ENCODE measurements at regions of chr2 and their contacts with region 1.

Region 1: DNA sequence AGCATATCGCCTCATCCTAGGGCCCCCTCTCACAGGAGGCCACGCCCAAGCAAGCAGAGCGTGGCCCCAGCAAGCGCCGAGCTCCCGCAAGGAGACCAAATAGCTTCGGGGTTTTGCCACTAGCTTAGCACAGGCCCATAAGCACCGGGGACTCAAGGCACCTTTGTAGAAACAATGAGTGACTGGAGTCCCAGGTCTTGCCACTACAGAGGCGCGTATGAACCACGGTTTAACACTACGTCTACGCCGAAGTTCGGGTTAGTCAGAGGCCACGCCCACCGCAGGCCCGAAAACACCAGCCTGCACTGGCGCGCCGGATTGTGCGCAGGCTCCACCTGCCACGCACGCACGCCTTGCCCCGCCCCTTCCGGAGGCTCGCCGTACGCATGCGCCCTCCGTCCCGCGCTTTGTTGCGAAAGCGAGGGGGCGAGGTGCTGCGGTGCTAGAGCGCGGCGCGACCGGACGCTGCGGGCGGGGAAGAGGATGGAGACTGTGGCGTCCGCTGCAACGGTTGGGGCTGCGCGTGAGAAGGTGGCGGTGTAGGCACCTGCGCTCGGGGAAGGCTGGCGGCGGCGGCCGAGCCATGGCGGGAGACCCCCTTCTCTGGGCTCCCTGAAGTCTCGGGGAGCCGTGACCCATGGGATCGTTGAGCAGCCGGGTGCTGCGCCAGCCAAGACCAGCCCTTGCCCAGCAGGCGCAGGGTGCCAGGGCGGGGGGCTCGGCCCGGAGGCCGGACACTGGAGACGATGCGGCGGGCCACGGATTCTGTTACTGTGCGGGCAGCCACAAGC is at the start of gene GMCL1:
- DNase-seq: peak; percentile 98 to 100 (median 99)
- ATAC-seq: peak; percentile 97
- H3K4me3 ChIP-seq: peak within 1 kb of the TSS; percentile 81
- H3K4me3 Mint-ChIP-seq: peak within 1 kb of the TSS; percentile 83 to 97 (median 94)
- H3K27ac ChIP-seq: peak within 1 kb of the TSS; percentile 88
- H3K27ac Mint-ChIP-seq: peak within 1 kb of the TSS; percentile 89 to 97 (median 95)
- H3K4me1 ChIP-seq: peaks cover 10 to 17% of the 10 kb centered on the region in 2 donors
- H3K4me1 Mint-ChIP-seq: peaks cover 31 to 61% (median 54%) of the 10 kb centered on the region in 7 donors
- H3K27me3 ChIP-seq: no peaks in the 10 kb centered on the region
- H3K27me3 Mint-ChIP-seq: no peaks in the 10 kb centered on the region
- total RNA-seq, gene GMCL1: 24.9 to 30.5 (median 27.3) TPM

Region 2: GRCh38 chr2:69386789-69387734 is 442.4 kb before region 1 on chr2 and contains the start of gene GFPT1:
- CTCF ChIA-PET with region 1: no interaction called
- POLR2A ChIA-PET with region 1: no interaction called
- intact Hi-C with region 1: loop called (anchors 1 to 2 kb)
- DNase-seq: peak; percentile 85 to 96 (median 91)
- ATAC-seq: peak; percentile 99
- H3K4me3 ChIP-seq: peak within 1 kb of the TSS; percentile 68
- H3K4me3 Mint-ChIP-seq: peak within 1 kb of the TSS; percentile 84 to 94 (median 88)
- H3K27ac ChIP-seq: peak within 1 kb of the TSS; percentile 83
- H3K27ac Mint-ChIP-seq: peak within 1 kb of the TSS; percentile 63 to 94 (median 86)
- H3K4me1 ChIP-seq: peaks cover 17 to 18% of the 10 kb centered on the region in 2 donors
- H3K4me1 Mint-ChIP-seq: peaks cover 28 to 53% (median 41%) of the 10 kb centered on the region in 7 donors
- H3K27me3 ChIP-seq: no peaks in the 10 kb centered on the region
- H3K27me3 Mint-ChIP-seq: no peaks in the 10 kb centered on the region
- total RNA-seq, gene GFPT1: 12.8 to 29.8 (median 16.6) TPM

Region 3: GRCh38 chr2:69741619-69742466 is 87.6 kb before region 1 on chr2 and contains the start of gene ANXA4:
- CTCF ChIA-PET with region 1: no interaction called
- POLR2A ChIA-PET with region 1: no interaction called
- intact Hi-C with region 1: loop called in 1 of 2 experiments (anchors 1 kb)
- DNase-seq: peak; percentile 23 to 75 (median 33)
- ATAC-seq: peak; percentile 83
- H3K4me3 ChIP-seq: peak within 1 kb of the TSS; percentile 63
- H3K4me3 Mint-ChIP-seq: peak within 1 kb of the TSS; percentile 76 to 98 (median 94)
- H3K27ac ChIP-seq: peak within 1 kb of the TSS; percentile 67
- H3K27ac Mint-ChIP-seq: peak within 1 kb of the TSS in 8 of 9 donors; percentile 72 to 93 (median 86)
- H3K4me1 ChIP-seq: peaks cover 0 to 2% of the 10 kb centered on the region in 2 donors
- H3K4me1 Mint-ChIP-seq: peaks cover 6 to 36% (median 14%) of the 10 kb centered on the region in 7 donors
- H3K27me3 ChIP-seq: no peaks in the 10 kb centered on the region
- H3K27me3 Mint-ChIP-seq: peaks cover 0 to 21% (median 0%) of the 10 kb centered on the region in 5 donors
- total RNA-seq, gene ANXA4: 8.0 to 75.6 (median 15.9) TPM

Region 4: GRCh38 chr2:69816923-69817542 is 12.4 kb before region 1 on chr2:
- CTCF ChIA-PET with region 1: interaction called, 4 read pairs
- POLR2A ChIA-PET with region 1: interaction called, 3 read pairs
- intact Hi-C with region 1: loop called in 1 of 2 experiments (anchors 1 kb)
- DNase-seq: peak in 8 of 9 donors; percentile 63 to 84 (median 79)
- ATAC-seq: peak; percentile 86
- H3K4me3 ChIP-seq: no peak overlapping the region
- H3K4me3 Mint-ChIP-seq: no peak overlapping the region
- H3K27ac ChIP-seq: no peak overlapping the region
- H3K27ac Mint-ChIP-seq: no peak overlapping the region
- H3K4me1 ChIP-seq: no peaks in the 10 kb centered on the region
- H3K4me1 Mint-ChIP-seq: peaks cover 0 to 15% (median 5%) of the 10 kb centered on the region in 7 donors
- H3K27me3 ChIP-seq: no peaks in the 10 kb centered on the region
- H3K27me3 Mint-ChIP-seq: no peaks in the 10 kb centered on the region

Region 5: DNA sequence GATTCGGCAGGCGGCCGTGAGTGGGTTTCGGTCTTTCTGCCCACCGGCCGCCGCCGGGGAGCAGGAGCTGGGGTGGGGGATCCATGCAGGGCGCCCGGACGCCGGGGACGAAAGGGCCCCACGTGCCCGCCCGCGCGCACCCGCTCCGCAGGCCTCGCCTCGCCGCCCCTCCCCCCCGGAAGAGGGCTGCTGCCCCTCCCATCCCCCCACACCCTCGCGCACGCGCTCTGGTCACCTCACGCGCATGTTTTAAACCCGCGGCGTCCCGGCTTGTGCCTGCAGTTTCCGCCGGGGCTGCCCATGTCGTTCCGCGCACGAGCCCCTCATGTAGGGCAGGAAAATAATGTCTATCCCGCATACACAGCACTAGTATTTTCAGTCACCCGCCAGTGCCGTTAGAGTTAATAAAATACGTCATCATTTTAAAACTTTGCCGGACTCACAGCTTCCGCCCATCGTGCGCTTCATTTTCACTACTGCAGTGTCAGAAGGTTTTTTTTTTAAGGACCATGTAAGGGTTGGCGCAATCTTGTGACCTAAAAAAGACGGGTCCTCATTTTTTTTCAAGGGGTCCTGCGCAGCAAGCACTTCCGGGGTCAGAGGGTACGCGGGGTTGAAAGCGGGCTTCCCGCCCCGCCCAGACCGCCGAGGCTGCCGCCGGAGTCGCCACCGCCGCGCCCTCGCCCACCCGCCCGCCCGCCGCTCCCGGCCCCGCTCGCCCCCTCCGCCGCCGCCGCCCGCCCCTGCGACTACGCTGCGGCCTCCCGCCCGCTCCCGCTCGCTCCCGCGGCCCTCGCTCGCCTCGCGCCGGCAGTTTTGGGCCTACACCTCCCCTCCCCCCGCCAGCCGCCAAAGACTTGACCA is 257.6 kb after region 1 on chr2 and contains the start of gene PCBP1:
- CTCF ChIA-PET with region 1: no interaction called
- POLR2A ChIA-PET with region 1: no interaction called
- intact Hi-C with region 1: loop called (anchors 1 to 2 kb)
- DNase-seq: peak; percentile 94 to 100 (median 98)
- ATAC-seq: peak; percentile 83
- H3K4me3 ChIP-seq: peak within 1 kb of the TSS; percentile 86
- H3K4me3 Mint-ChIP-seq: peak within 1 kb of the TSS; percentile 91 to 98 (median 97)
- H3K27ac ChIP-seq: peak within 1 kb of the TSS; percentile 100
- H3K27ac Mint-ChIP-seq: peak within 1 kb of the TSS; percentile 99 to 100 (median 100)
- H3K4me1 ChIP-seq: peaks cover 55 to 59% of the 10 kb centered on the region in 2 donors
- H3K4me1 Mint-ChIP-seq: peaks cover 40 to 67% (median 59%) of the 10 kb centered on the region in 7 donors
- H3K27me3 ChIP-seq: no peaks in the 10 kb centered on the region
- H3K27me3 Mint-ChIP-seq: peaks cover 0 to 4% (median 0%) of the 10 kb centered on the region in 5 donors
- total RNA-seq, gene PCBP1: 257 to 487 (median 368) TPM

Region 6: GRCh38 chr2:70190418-70191243 is 361.2 kb after region 1 on chr2 and contains the start of gene C2orf42:
- CTCF ChIA-PET with region 1: no interaction called
- POLR2A ChIA-PET with region 1: no interaction called
- intact Hi-C with region 1: loop called (anchors 1 kb)
- DNase-seq: peak; percentile 87 to 97 (median 96)
- ATAC-seq: peak; percentile 94
- H3K4me3 ChIP-seq: peak within 1 kb of the TSS; percentile 72
- H3K4me3 Mint-ChIP-seq: peak within 1 kb of the TSS; percentile 86 to 97 (median 93)
- H3K27ac ChIP-seq: peak within 1 kb of the TSS; percentile 93
- H3K27ac Mint-ChIP-seq: peak within 1 kb of the TSS; percentile 94 to 100 (median 99)
- H3K4me1 ChIP-seq: peaks cover 0 to 8% of the 10 kb centered on the region in 2 donors
- H3K4me1 Mint-ChIP-seq: peaks cover 7 to 24% (median 21%) of the 10 kb centered on the region in 7 donors
- H3K27me3 ChIP-seq: no peaks in the 10 kb centered on the region
- H3K27me3 Mint-ChIP-seq: peaks cover 0 to 2% (median 0%) of the 10 kb centered on the region in 5 donors
- total RNA-seq, gene C2orf42: 20.6 to 45.9 (median 30.3) TPM

Region 7: DNA sequence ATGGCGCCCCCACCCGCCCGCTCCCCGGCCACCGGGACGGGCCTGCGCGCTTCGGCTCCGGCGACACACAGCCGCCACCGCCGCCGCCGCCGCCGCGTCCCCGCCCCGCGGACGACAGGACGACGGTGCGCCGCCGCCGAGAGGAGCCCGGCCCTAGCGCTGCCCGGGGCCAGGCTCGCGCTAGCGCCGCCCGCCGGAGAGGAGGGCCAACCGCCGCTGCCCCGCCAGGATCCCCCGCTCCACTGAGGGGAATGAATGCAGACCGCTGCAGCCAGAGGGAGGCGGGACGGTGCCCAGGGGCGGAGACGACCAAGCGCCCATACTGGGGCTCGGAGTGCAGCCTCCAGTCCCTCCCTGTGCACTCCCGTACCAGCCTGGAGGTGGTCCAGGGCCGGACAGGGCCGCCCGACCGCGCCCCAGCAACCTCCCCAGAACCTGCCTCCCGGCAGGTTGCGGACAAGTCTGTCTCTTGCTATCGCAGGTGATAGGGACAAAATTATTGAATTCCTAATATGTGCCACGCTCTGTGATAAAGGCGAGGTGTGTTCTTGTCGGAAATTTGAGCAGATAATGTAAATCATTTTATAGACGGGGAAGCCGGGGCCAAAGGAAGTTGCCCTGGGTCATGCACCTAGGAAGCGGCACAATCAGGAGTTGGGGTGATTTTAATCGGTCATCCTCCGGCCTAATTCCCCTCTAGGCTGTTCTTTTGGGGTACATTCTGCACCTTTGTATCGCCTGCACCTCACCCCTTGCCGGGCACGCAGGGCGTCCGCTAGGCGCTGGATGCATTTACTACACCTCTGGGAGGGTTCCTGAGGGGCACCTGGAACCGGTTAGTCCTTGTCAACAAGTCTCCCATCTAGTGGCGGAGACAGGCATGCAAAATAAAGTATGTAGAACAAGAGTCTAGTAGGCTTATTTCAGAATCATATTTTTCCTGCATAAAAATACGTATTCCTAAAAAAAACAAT is 1165.6 kb after region 1 on chr2 and contains the start of gene TEX261:
- CTCF ChIA-PET with region 1: no interaction called
- POLR2A ChIA-PET with region 1: no interaction called
- intact Hi-C with region 1: loop called in 1 of 2 experiments (anchors 10 kb)
- DNase-seq: peak; percentile 81 to 97 (median 88)
- ATAC-seq: peak; percentile 98
- H3K4me3 ChIP-seq: peak within 1 kb of the TSS; percentile 92
- H3K4me3 Mint-ChIP-seq: peak within 1 kb of the TSS; percentile 95 to 100 (median 98)
- H3K27ac ChIP-seq: peak within 1 kb of the TSS; percentile 88
- H3K27ac Mint-ChIP-seq: peak within 1 kb of the TSS; percentile 88 to 99 (median 96)
- H3K4me1 ChIP-seq: peaks cover 19 to 21% of the 10 kb centered on the region in 2 donors
- H3K4me1 Mint-ChIP-seq: peaks cover 23 to 44% (median 36%) of the 10 kb centered on the region in 7 donors
- H3K27me3 ChIP-seq: no peaks in the 10 kb centered on the region
- H3K27me3 Mint-ChIP-seq: no peaks in the 10 kb centered on the region
- total RNA-seq, gene TEX261: 33.2 to 66.3 (median 56.4) TPM

Measured in naive thymus-derived CD4-positive, alpha-beta T cell (primary cell).